ENCODE measurements at regions of chr14 and their contacts with region 1.

Region 1: GRCh38 chr14:50321009-50321660 is 9.0 kb downstream of the DMAC2L start:
- DNase-seq: peak; percentile 82
- ATAC-seq: peak; percentile 91
- H3K4me3 ChIP-seq: peak overlapping the region; percentile 47; the same call in 1 of the 2 replicates
- H3K27ac ChIP-seq: peak overlapping the region; percentile 77
- H3K4me1 ChIP-seq: peaks cover 27% of the 10 kb centered on the region
- H3K27me3 ChIP-seq: no peaks in the 10 kb centered on the region
- CTCF ChIP-seq: peak; percentile 86 to 97 (median 89)
- EP300 ChIP-seq: peak in 1 of 2 experiments; percentile 52; a peak in 1 of 4 replicates
- POLR2A ChIP-seq: no peak
- RAD21 ChIP-seq: peak; percentile 54

Region 2: DNA sequence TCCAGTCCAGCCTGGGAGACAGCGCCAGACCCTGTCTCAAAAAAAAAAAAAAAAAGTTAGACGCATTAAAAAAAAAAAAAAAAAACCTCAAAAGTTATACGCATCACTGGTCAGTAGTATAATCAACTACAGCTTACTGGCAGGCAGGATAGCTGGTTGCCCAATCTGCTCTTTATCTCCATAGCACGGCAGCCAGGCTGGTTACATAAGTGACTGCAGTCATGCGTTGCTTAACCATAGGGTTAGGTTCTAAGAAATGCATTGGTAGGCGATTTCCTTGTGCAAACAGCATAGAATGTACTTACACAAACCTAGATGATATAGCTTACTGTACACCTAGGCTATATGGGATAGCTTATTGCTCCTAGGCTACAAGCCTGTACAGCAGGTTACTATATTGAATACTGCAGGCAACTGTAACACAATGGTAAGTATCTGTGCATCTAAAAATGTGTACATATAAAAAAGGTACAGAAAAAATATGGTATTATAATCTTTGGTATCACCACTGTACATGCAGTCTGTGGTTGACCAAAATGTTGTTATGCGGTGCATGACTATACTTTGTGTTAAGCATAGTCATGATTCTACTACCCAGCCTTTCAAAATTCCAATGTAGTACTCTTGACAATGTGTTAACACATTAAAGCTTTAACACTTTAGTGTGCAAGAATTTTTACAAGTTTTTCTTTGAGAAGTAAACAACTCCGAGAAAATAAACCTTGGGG is 17.2 kb before region 1 on chr14:
- CTCF ChIA-PET with region 1: interaction called, 11 read pairs
- POLR2A ChIA-PET with region 1: no interaction called
- RAD21 ChIA-PET with region 1: no interaction called
- SMC1A ChIA-PET with region 1: interaction called, 3 read pairs
- in situ Hi-C with region 1: no loop called
- intact Hi-C with region 1: no loop called
- DNase-seq: no peak
- ATAC-seq: peak; percentile 52
- H3K4me3 ChIP-seq: no peak overlapping the region
- H3K27ac ChIP-seq: no peak overlapping the region
- H3K4me1 ChIP-seq: no peaks in the 10 kb centered on the region
- H3K27me3 ChIP-seq: no peaks in the 10 kb centered on the region
- CTCF ChIP-seq: no peak
- EP300 ChIP-seq: no peak
- POLR2A ChIP-seq: no peak
- RAD21 ChIP-seq: no peak

Region 3: GRCh38 chr14:50342221-50343078 is 21.3 kb after region 1 on chr14:
- CTCF ChIA-PET with region 1: interaction called, 22 read pairs
- POLR2A ChIA-PET with region 1: no interaction called
- RAD21 ChIA-PET with region 1: interaction called, 7 read pairs
- SMC1A ChIA-PET with region 1: interaction called, 11 read pairs
- in situ Hi-C with region 1: no loop called
- intact Hi-C with region 1: no loop called
- DNase-seq: no peak
- ATAC-seq: peak; percentile 86
- H3K4me3 ChIP-seq: no peak overlapping the region
- H3K27ac ChIP-seq: no peak overlapping the region
- H3K4me1 ChIP-seq: peaks cover 9% of the 10 kb centered on the region
- H3K27me3 ChIP-seq: no peaks in the 10 kb centered on the region
- CTCF ChIP-seq: peak; percentile 60 to 84 (median 67)
- EP300 ChIP-seq: no peak
- POLR2A ChIP-seq: no peak
- RAD21 ChIP-seq: peak; percentile 83

Region 4: DNA sequence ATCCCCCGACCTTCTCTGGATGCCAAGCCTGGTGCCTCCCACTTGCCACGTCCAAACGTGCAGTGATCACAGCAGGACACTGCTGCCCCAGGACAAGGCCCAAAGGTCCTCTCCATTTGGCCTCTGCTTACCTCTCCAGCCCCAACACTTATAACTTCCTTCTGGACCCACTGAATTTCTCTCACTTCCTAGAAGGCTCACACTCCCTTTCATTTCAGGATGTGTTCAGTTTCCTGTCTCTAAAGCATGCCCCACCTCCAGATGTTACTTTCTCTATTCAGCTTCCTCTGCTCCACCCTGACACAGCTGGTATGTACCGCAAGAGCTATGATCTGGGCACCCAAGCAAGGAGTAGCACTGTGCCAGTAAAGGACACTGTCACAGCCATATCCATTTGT is 42.6 kb after region 1 on chr14:
- CTCF ChIA-PET with region 1: interaction called, 17 read pairs
- POLR2A ChIA-PET with region 1: interaction called, 6 read pairs
- RAD21 ChIA-PET with region 1: interaction called, 16 read pairs
- SMC1A ChIA-PET with region 1: interaction called, 16 read pairs
- in situ Hi-C with region 1: no loop called
- intact Hi-C with region 1: no loop called
- DNase-seq: peak; percentile 81
- ATAC-seq: peak; percentile 97
- H3K4me3 ChIP-seq: peak overlapping the region; percentile 80
- H3K27ac ChIP-seq: peak overlapping the region; percentile 94
- H3K4me1 ChIP-seq: peaks cover 11% of the 10 kb centered on the region
- H3K27me3 ChIP-seq: no peaks in the 10 kb centered on the region
- CTCF ChIP-seq: no peak
- EP300 ChIP-seq: no peak
- POLR2A ChIP-seq: peak; percentile 69
- RAD21 ChIP-seq: no peak

Region 5: GRCh38 chr14:50521912-50522341 is 200.8 kb after region 1 on chr14:
- CTCF ChIA-PET with region 1: interaction called, 11 read pairs
- POLR2A ChIA-PET with region 1: no interaction called
- RAD21 ChIA-PET with region 1: interaction called, 14 read pairs
- SMC1A ChIA-PET with region 1: interaction called, 7 read pairs
- in situ Hi-C with region 1: loop called (anchors 5 kb)
- intact Hi-C with region 1: no loop called
- DNase-seq: no peak
- ATAC-seq: peak; percentile 82
- H3K4me3 ChIP-seq: no peak overlapping the region
- H3K27ac ChIP-seq: peak overlapping the region; percentile 81; the same call in 1 of the 2 replicates
- H3K4me1 ChIP-seq: peaks cover 38% of the 10 kb centered on the region
- H3K27me3 ChIP-seq: no peaks in the 10 kb centered on the region
- CTCF ChIP-seq: no peak
- EP300 ChIP-seq: no peak
- POLR2A ChIP-seq: no peak
- RAD21 ChIP-seq: no peak

Region 6: GRCh38 chr14:50688875-50689274 is 367.7 kb after region 1 on chr14:
- CTCF ChIA-PET with region 1: no interaction called
- POLR2A ChIA-PET with region 1: no interaction called
- RAD21 ChIA-PET with region 1: no interaction called
- SMC1A ChIA-PET with region 1: no interaction called
- in situ Hi-C with region 1: no loop called
- intact Hi-C with region 1: no loop called
- DNase-seq: no peak
- ATAC-seq: no peak
- H3K4me3 ChIP-seq: no peak overlapping the region
- H3K27ac ChIP-seq: no peak overlapping the region
- H3K4me1 ChIP-seq: no peaks in the 10 kb centered on the region
- H3K27me3 ChIP-seq: no peaks in the 10 kb centered on the region
- CTCF ChIP-seq: no peak
- EP300 ChIP-seq: no peak
- POLR2A ChIP-seq: no peak
- RAD21 ChIP-seq: no peak

Measured in GM12878 (cell line).